ENCODE measurements at regions of chr14 and their contacts with region 1.

Region 1: GRCh38 chr14:75452900-75453747 is 25.3 kb downstream of the JDP2 start:
- DNase-seq: no peak
- ATAC-seq: no peak
- H3K4me3 Mint-ChIP-seq: no peak overlapping the region
- H3K27ac Mint-ChIP-seq: peak overlapping the region; percentile 50
- H3K4me1 Mint-ChIP-seq: peaks cover 5% of the 10 kb centered on the region
- H3K27me3 Mint-ChIP-seq: peaks cover 10% of the 10 kb centered on the region

Region 2: GRCh38 chr14:75301666-75302325 is 151.3 kb before region 1 on chr14:
- CTCF ChIA-PET with region 1: interaction called, 26 read pairs
- POLR2A ChIA-PET with region 1: no interaction called
- DNase-seq: no peak
- ATAC-seq: peak; percentile 20
- H3K4me3 Mint-ChIP-seq: no peak overlapping the region
- H3K27ac Mint-ChIP-seq: peak overlapping the region; percentile 63
- H3K4me1 Mint-ChIP-seq: peaks cover 21% of the 10 kb centered on the region
- H3K27me3 Mint-ChIP-seq: peaks cover 3% of the 10 kb centered on the region

Region 3: DNA sequence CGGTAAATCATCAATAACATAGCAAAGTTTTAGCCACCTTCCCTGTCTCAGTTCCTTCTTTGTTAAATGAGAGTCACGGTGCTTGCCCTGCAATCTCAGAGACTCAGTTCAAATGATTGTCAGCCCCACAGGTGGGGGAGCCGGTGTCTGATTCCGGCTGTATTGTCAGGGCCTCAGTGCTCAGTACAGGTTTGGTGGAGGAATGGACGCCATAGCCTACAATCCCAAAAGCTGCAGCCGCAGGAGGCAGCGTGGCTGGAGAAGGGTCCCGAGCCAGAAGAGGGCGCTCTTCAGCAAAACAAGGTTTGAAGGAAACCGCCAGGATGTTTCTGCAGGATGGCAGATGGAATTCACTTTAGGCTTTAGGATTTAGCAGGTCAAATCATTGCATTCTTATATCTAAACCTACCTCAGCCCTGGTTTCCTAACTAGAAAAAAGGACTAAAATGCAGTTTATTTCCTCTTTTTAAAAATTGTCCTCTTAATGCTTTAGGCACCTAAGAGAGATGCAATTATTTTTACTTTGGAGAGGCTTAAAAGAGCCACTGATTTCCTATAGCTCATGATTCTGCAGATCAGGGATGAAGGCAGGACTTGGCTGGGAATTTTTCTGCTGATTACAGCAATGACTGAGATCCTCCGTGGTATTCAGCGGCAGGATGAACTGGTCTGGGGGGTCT is 145.3 kb before region 1 on chr14:
- CTCF ChIA-PET with region 1: interaction called, 26 read pairs
- POLR2A ChIA-PET with region 1: no interaction called
- DNase-seq: peak; percentile 81
- ATAC-seq: peak; percentile 80
- H3K4me3 Mint-ChIP-seq: no peak overlapping the region
- H3K27ac Mint-ChIP-seq: no peak overlapping the region
- H3K4me1 Mint-ChIP-seq: peaks cover 26% of the 10 kb centered on the region
- H3K27me3 Mint-ChIP-seq: peaks cover 3% of the 10 kb centered on the region

Region 4: DNA sequence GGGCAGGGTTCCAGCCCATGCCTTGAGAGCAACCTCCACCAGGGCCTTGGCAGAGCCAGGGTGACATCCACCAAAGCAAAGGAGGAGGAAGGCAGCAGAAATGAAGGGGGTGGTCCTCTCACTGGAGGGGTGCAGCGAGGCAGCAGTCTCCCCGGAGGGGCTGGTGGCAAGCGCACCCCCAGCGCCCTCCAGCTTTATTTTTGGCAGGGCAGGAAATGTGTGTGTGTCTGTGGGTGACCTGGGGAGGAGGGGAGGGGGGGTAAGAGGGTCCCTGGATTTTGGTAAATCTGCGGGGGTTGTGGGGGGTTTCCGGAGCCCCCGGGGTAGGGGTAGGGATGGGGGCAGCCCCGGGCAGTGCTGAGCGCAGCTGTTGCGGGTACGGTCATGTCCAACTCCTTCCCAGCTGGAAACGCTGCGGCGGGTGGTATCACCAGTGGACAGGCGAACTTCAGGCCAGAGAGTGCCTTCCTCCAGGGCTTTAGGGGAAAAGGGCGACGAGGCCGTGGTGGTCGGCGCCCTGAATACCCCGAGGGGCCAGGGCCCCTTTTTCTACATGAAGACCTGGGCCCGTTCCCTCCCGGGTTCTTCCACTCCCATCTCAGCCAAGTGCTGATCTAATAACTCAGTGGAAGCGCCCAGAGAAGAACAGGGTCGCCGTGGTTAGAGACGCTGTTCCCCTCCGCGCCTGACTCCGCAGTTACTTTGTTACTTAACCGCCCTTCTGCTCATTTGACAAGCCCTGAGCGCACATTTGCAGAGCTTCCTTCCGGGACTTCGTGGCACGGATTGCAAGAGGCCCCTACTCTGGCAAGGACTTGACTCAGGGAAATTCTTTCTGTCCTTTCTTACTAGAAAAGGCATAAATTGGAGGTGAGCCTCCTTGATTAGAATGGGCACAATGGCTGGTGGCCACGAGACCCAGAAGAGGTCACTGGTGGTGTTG is 119.2 kb before region 1 on chr14:
- CTCF ChIA-PET with region 1: interaction called, 14 read pairs
- POLR2A ChIA-PET with region 1: interaction called, 3 read pairs
- DNase-seq: peak; percentile 73
- ATAC-seq: peak; percentile 95
- H3K4me3 Mint-ChIP-seq: peak overlapping the region; percentile 63
- H3K27ac Mint-ChIP-seq: peak overlapping the region; percentile 92
- H3K4me1 Mint-ChIP-seq: peaks cover 28% of the 10 kb centered on the region
- H3K27me3 Mint-ChIP-seq: peaks cover 8% of the 10 kb centered on the region

Region 5: DNA sequence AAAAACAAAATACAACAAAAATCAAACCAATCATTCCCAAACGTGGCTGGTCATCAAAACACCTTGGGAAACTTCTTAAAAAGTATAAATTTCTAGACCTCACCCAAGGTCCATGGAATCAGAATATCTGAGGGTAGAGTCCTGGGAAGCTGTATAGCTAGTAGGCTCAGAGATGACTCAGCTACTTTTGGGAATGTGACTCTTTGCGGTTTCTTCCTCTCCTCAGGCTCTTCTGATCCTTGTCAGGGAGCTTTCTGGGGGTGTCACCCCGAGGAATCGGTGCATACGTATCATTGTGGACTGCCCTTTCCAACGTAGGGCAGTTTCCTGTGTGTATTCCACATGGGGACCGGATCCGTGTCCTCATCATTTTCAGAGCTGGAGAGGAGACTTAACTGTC is 10.5 kb before region 1 on chr14:
- CTCF ChIA-PET with region 1: interaction called, 16 read pairs
- POLR2A ChIA-PET with region 1: interaction called, 3 read pairs
- DNase-seq: no peak
- ATAC-seq: no peak
- H3K4me3 Mint-ChIP-seq: no peak overlapping the region
- H3K27ac Mint-ChIP-seq: no peak overlapping the region
- H3K4me1 Mint-ChIP-seq: peaks cover 8% of the 10 kb centered on the region
- H3K27me3 Mint-ChIP-seq: peaks cover 2% of the 10 kb centered on the region

Measured in activated CD8-positive, alpha-beta T cell treated with anti-CD3 and anti-CD28 coated beads, Interleukin-2, amount 10 ng/mL, durations not matched to agents 7 days and 5 days (primary cell).